ENCODE measurements at regions of chr9 and their contacts with region 1.

Region 1: GRCh38 chr9:106648799-106649198 is 214.2 kb upstream of the ZNF462 start:
- DNase-seq: no peak
- H3K4me3 ChIP-seq: no peak overlapping the region
- H3K27ac ChIP-seq: no peak overlapping the region
- H3K4me1 ChIP-seq: no peaks in the 10 kb centered on the region
- H3K27me3 ChIP-seq: no peaks in the 10 kb centered on the region
- CTCF ChIP-seq: peak in 3 of 4 experiments; percentile 13 to 43 (median 18)
- POLR2A ChIP-seq: no peak

Region 2: GRCh38 chr9:106704056-106704640 is 55.3 kb after region 1 on chr9:
- intact Hi-C with region 1: loop called (anchors 10 kb)
- DNase-seq: no peak
- H3K4me3 ChIP-seq: no peak overlapping the region
- H3K27ac ChIP-seq: no peak overlapping the region
- H3K4me1 ChIP-seq: no peaks in the 10 kb centered on the region
- H3K27me3 ChIP-seq: no peaks in the 10 kb centered on the region
- CTCF ChIP-seq: no peak
- POLR2A ChIP-seq: no peak

Region 3: DNA sequence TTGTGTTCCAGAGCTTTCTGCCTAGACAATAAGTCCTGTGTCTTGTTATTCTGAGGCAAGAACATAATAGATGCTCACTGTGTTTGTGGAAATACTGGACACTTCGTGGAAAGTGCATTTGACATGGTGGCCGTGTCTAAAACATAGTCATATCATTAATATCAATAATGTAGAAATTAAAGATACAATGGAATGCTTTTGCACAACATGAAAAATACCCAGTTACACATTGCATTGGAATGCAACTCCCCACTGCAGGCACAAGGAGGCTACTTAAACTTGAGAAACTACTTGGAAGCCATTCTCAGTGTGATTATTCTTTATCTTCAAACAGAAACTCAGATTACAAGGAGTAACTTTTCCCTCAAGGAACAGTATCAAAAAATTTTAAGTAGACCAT is 68.9 kb after region 1 on chr9:
- intact Hi-C with region 1: no loop called
- DNase-seq: no peak
- H3K4me3 ChIP-seq: no peak overlapping the region
- H3K27ac ChIP-seq: no peak overlapping the region
- H3K4me1 ChIP-seq: no peaks in the 10 kb centered on the region
- H3K27me3 ChIP-seq: no peaks in the 10 kb centered on the region
- CTCF ChIP-seq: peak in 1 of 4 experiments; percentile 28
- POLR2A ChIP-seq: no peak

Measured in prostate gland (tissue), 2 donors.